ENCODE measurements at regions of chr12 and their contacts with region 1.

Region 1: GRCh38 chr12:121399391-121400331 is at the start of gene RNF34:
- DNase-seq: peak; percentile 99
- ATAC-seq: peak; percentile 93
- H3K4me3 Mint-ChIP-seq: peak within 1 kb of the TSS; percentile 89
- H3K27ac Mint-ChIP-seq: peak within 1 kb of the TSS; percentile 95
- H3K4me1 Mint-ChIP-seq: peaks cover 36% of the 10 kb centered on the region
- H3K27me3 Mint-ChIP-seq: no peaks in the 10 kb centered on the region
- total RNA-seq, gene RNF34: 96.1 to 102 TPM

Region 2: DNA sequence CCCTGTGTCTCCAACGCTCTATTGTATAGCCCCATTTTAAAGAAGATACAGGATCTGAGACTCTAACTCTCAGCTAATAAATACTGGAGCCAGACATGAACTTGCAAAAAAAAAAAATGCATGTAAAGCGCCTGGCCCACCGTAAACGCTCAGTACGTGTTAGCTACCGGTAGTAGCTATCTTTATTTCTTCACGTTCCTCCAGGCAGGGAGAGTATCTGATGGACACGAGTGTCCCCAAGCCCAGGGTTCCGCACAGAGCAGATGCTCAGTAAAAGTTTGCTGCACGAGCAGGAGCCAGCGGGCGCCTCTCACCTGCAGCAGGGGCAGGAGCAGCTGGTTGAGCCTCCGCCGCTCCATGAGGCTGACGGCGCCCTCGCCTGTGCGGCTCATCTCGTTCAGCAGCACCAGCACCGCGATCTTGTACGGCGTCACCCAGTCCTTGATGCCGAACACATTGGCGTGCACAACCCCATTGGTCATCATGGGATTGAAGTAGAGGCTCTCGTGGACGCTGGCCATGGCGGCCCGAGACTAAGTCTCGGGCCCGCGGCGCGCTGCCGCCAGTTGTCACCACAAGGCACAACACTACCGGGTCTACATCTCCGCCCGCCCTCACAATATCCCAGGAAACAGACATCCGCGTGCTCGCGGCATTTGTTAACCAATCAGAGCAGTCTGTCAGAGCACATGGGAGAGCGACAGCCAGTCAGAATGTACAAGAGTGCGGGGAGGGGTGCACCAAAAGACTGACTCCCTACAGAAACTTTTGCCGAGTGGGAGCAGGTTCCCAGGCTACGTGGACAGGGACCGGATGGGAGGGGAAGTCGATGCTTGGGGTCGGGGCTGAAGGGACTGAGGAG is 47.6 kb before region 1 on chr12 and contains the start of gene ANAPC5:
- CTCF ChIA-PET with region 1: interaction called, 11 read pairs
- DNase-seq: peak; percentile 96
- ATAC-seq: peak; percentile 98
- H3K4me3 Mint-ChIP-seq: peak within 1 kb of the TSS; percentile 93
- H3K27ac Mint-ChIP-seq: peak within 1 kb of the TSS; percentile 99
- H3K4me1 Mint-ChIP-seq: peaks cover 38% of the 10 kb centered on the region
- H3K27me3 Mint-ChIP-seq: peaks cover 6% of the 10 kb centered on the region
- total RNA-seq, gene ANAPC5: 138 to 157 TPM

Region 3: GRCh38 chr12:121371404-121371803 is 28.3 kb before region 1 on chr12:
- CTCF ChIA-PET with region 1: no interaction called
- DNase-seq: no peak
- ATAC-seq: no peak
- H3K4me3 Mint-ChIP-seq: no peak overlapping the region
- H3K27ac Mint-ChIP-seq: no peak overlapping the region
- H3K4me1 Mint-ChIP-seq: peaks cover 2% of the 10 kb centered on the region
- H3K27me3 Mint-ChIP-seq: peaks cover 2% of the 10 kb centered on the region